T-cell (primary cell): ENCODE measurements at regions of chr9 and their contacts with region 1.

Region 1: DNA sequence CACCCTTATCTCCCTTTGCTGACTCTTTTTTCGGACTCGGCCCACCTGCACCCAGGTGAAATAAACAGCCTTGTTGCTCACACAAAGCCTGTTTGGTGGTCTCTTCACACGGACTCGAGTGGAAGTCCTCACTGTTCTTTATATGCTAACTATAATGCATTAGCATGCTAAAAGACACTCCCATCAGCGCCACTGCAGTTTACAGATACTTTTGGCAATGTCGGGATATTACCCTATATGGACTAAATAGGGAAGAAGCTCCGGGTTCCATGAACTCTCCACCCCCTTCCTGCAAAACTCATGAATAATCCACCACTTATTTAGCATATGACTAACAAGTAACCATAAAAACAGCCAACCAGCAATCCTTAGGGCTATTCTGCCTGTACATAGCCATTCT is 426.2 kb upstream of the PTPRD start:
- DNase-seq: no peak
- ATAC-seq: no peak
- H3K4me3 ChIP-seq: no peak overlapping the region
- H3K4me3 Mint-ChIP-seq: no peak overlapping the region
- H3K27ac ChIP-seq: no peak overlapping the region
- H3K27ac Mint-ChIP-seq: no peak overlapping the region
- H3K4me1 ChIP-seq: no peaks in the 10 kb centered on the region
- H3K4me1 Mint-ChIP-seq: no peaks in the 10 kb centered on the region
- H3K27me3 ChIP-seq: no peaks in the 10 kb centered on the region
- H3K27me3 Mint-ChIP-seq: no peaks in the 10 kb centered on the region

Region 2: DNA sequence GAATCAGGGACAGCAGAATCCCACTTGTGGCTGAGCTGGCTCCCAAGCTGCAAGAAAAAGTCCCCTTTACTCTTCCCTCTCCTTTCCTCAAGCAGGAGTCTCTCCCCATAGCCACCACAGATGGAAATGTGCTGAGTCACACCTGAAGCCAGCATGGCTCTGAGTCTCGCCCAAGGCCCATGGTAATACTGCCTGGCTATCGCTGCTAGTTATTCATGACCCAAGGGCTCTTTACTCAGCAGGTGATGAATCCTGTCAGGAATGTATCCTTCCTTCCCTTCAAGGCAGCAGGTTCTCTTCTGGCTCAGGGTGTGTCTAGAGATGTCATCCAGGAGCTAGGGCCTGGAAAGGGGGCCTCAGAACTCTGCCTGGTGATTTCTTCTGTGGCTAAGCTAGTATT is 22.9 kb before region 1 on chr9:
- CTCF ChIA-PET with region 1: no interaction called
- POLR2A ChIA-PET with region 1: interaction called in 1 of 2 experiments, 13 read pairs
- DNase-seq: no peak
- ATAC-seq: no peak
- H3K4me3 ChIP-seq: no peak overlapping the region
- H3K4me3 Mint-ChIP-seq: no peak overlapping the region
- H3K27ac ChIP-seq: no peak overlapping the region
- H3K27ac Mint-ChIP-seq: no peak overlapping the region
- H3K4me1 ChIP-seq: no peaks in the 10 kb centered on the region
- H3K4me1 Mint-ChIP-seq: no peaks in the 10 kb centered on the region
- H3K27me3 ChIP-seq: no peaks in the 10 kb centered on the region
- H3K27me3 Mint-ChIP-seq: no peaks in the 10 kb centered on the region